ENCODE measurements at regions of chr2 and their contacts with region 1.

Region 1: GRCh38 chr2:143259368-143259958 is 130.2 kb downstream of the ARHGAP15 start:
- DNase-seq: peak; percentile 64
- H3K4me3 Mint-ChIP-seq: peak overlapping the region; percentile 78
- H3K27ac Mint-ChIP-seq: peak overlapping the region; percentile 97
- H3K4me1 Mint-ChIP-seq: peaks cover 85% of the 10 kb centered on the region
- H3K27me3 Mint-ChIP-seq: no peaks in the 10 kb centered on the region

Region 2: GRCh38 chr2:142796161-142796560 is 463.3 kb before region 1 on chr2:
- intact Hi-C with region 1: no loop called
- DNase-seq: no peak
- H3K4me3 Mint-ChIP-seq: no peak overlapping the region
- H3K27ac Mint-ChIP-seq: no peak overlapping the region
- H3K4me1 Mint-ChIP-seq: no peaks in the 10 kb centered on the region
- H3K27me3 Mint-ChIP-seq: no peaks in the 10 kb centered on the region

Region 3: GRCh38 chr2:143110758-143111428 is 148.6 kb before region 1 on chr2:
- intact Hi-C with region 1: loop called (anchors 1 kb)
- DNase-seq: peak; percentile 43
- H3K4me3 Mint-ChIP-seq: peak overlapping the region; percentile 75
- H3K27ac Mint-ChIP-seq: peak overlapping the region; percentile 85
- H3K4me1 Mint-ChIP-seq: peaks cover 46% of the 10 kb centered on the region
- H3K27me3 Mint-ChIP-seq: no peaks in the 10 kb centered on the region

Region 4: GRCh38 chr2:143162123-143162837 is 97.2 kb before region 1 on chr2:
- intact Hi-C with region 1: loop called (anchors 1 kb)
- DNase-seq: peak; percentile 39
- H3K4me3 Mint-ChIP-seq: no peak overlapping the region
- H3K27ac Mint-ChIP-seq: peak overlapping the region; percentile 20
- H3K4me1 Mint-ChIP-seq: peaks cover 83% of the 10 kb centered on the region
- H3K27me3 Mint-ChIP-seq: no peaks in the 10 kb centered on the region

Region 5: GRCh38 chr2:143205106-143205764 is 54.2 kb before region 1 on chr2:
- intact Hi-C with region 1: loop called (anchors 1 kb)
- DNase-seq: no peak
- H3K4me3 Mint-ChIP-seq: no peak overlapping the region
- H3K27ac Mint-ChIP-seq: peak overlapping the region; percentile 41
- H3K4me1 Mint-ChIP-seq: peaks cover 44% of the 10 kb centered on the region
- H3K27me3 Mint-ChIP-seq: no peaks in the 10 kb centered on the region

Region 6: DNA sequence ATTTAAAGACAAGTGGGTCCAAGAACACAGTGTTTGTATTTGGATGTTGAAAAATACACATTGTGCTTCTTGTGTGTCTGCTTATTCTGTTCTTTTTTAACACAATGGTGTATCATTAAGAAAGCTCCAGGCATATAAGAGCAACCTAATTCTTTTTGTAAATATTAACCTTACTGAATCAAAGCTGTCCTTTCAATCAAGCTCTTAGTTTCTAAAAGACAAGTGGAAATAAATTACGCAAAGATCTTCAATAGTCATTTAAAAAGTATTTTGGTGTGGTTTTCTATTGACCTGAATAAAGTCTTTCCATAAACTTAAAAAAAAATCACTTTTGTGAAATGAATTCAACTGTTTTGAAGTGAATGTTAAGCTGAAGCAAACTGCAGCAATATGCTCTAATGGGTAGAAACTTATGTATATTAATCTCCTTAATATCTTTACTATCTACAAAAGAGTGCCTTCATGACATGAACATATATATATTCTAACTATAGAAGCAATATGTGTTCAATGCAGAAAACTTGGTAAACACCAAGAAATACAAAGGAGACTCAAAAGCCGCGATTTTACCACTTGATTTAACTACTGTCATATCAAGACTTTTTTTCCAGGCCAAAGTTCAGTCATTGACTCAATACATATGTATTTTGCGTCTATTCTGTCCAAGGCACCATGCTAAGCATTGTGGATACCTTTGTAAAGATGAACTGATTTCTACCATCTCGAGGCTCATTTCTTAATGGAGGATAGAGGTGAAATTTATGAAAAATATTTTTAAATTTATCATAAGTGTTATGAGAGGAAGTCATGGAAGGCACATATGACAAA is 32.5 kb before region 1 on chr2:
- intact Hi-C with region 1: loop called (anchors 1 kb)
- DNase-seq: no peak
- H3K4me3 Mint-ChIP-seq: no peak overlapping the region
- H3K27ac Mint-ChIP-seq: peak overlapping the region; percentile 56
- H3K4me1 Mint-ChIP-seq: peaks cover 53% of the 10 kb centered on the region
- H3K27me3 Mint-ChIP-seq: no peaks in the 10 kb centered on the region

Region 7: GRCh38 chr2:143246815-143247744 is 12.4 kb before region 1 on chr2:
- intact Hi-C with region 1: no loop called
- DNase-seq: no peak
- H3K4me3 Mint-ChIP-seq: no peak overlapping the region
- H3K27ac Mint-ChIP-seq: no peak overlapping the region
- H3K4me1 Mint-ChIP-seq: peaks cover 22% of the 10 kb centered on the region
- H3K27me3 Mint-ChIP-seq: no peaks in the 10 kb centered on the region

Region 8: GRCh38 chr2:143468341-143468888 is 209.0 kb after region 1 on chr2:
- intact Hi-C with region 1: loop called (anchors 2 kb)
- DNase-seq: no peak
- H3K4me3 Mint-ChIP-seq: peak overlapping the region; percentile 11
- H3K27ac Mint-ChIP-seq: peak overlapping the region; percentile 81
- H3K4me1 Mint-ChIP-seq: peaks cover 48% of the 10 kb centered on the region
- H3K27me3 Mint-ChIP-seq: no peaks in the 10 kb centered on the region

Region 9: GRCh38 chr2:144332356-144333142 is 1073.1 kb after region 1 on chr2:
- intact Hi-C with region 1: loop called (anchors 5 kb)
- DNase-seq: peak; percentile 91
- H3K4me3 Mint-ChIP-seq: peak overlapping the region; percentile 85
- H3K27ac Mint-ChIP-seq: peak overlapping the region; percentile 98
- H3K4me1 Mint-ChIP-seq: peaks cover 48% of the 10 kb centered on the region
- H3K27me3 Mint-ChIP-seq: no peaks in the 10 kb centered on the region